Adrenal gland (tissue), 19 donors: ENCODE measurements at regions of chr1 and their contacts with region 1.

Region 1: DNA sequence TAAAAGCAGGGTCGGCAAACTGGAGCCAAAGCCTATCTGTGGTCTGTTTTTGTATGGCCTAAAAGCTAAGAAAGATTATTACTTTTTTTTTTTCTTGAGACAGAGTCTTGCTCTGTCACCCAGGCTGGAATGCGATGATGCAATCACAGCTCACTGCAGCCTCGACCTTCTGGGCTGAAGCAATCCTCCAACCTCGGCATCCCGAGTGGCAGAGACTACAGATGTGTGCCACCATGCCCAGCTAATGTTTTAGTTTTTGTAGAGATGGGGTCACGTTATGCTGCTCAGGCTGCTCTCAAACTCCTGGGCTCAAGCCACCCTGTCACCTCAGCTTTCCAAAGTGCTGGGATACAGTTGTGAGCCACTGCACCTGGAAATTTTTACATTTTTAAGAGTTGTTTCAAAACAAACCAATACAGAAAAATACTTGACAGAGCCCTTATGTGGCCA is 6.5 kb upstream of the GLRX2 start:
- DNase-seq: peak; percentile 76 to 94 (median 92)
- H3K4me3 ChIP-seq: no peak overlapping the region
- H3K27ac ChIP-seq: peak overlapping the region; percentile 28 to 88 (median 69)
- H3K4me1 ChIP-seq: peaks cover 12 to 27% of the 10 kb centered on the region in 2 donors
- H3K27me3 ChIP-seq: no peaks in the 10 kb centered on the region
- CTCF ChIP-seq: no peak
- POLR2A ChIP-seq: peak in 1 of 2 donors; percentile 69

Region 2: DNA sequence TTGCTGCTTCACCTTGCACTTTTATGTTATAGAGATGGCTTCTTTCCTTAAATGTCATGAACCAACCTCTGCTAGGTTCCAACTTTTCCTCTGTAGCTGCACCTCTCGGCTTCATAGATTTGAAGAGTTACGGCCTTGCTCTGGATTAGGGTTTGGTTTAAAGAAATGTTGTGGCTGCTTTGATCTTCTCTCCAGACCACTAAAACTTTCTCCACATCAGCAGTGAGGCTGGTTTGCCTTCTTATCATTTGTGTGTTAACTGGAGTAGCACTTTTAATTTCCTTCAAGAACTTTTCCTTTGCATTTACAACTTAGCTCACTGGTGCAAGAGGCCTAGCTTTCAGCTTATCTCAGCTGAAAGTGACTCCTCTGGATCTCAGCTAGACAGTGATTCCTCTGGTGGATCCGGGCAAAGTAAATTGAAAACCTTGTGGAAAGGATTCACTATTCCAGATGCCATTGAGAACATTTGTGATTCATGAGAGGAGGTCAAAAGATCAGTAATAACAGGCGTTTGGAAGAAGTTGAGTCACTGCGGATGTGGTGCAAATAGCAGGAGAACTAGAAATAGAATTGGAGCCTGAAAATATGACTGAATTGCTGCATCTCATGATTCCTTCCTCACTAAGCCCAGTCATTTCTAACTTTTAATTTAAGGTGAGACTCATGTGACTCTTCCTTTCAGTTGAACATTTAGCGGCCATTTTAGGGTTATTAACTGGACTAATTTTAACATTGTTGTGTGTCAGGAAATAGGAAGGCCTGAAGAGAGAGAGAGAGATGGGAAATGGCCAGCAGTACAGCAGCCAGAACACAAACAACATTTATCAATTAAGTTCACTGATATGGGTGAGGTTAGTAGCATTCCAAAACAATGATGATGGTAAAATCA is 552.3 kb before region 1 on chr1:
- intact Hi-C with region 1: no loop called
- DNase-seq: peak in 5 of 7 donors; percentile 15 to 51 (median 26)
- H3K4me3 ChIP-seq: no peak overlapping the region
- H3K27ac ChIP-seq: peak overlapping the region in 3 of 5 donors; percentile 25 to 61 (median 39)
- H3K4me1 ChIP-seq: peaks cover 0 to 8% of the 10 kb centered on the region in 2 donors
- H3K27me3 ChIP-seq: no peaks in the 10 kb centered on the region
- CTCF ChIP-seq: no peak
- POLR2A ChIP-seq: no peak

Region 3: DNA sequence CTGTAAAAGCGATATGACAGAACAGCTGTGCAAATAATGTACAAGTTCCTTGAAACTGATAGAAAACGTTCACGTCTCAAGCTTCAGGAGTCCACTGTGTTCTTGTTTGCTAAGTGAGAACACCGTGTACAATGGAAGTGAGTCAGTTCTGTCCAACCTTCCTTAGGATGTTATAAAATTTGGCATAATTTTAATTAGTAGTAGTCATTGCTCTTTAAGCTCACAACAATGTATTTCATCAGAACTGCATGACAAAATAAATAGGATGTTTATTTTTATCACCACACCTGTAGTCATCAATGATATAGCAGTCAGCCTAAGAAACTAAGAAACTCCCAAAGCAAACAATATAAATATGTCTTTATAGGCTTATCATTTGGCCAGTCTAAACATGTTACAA is 249.8 kb before region 1 on chr1:
- intact Hi-C with region 1: no loop called
- DNase-seq: no peak
- H3K4me3 ChIP-seq: no peak overlapping the region
- H3K27ac ChIP-seq: no peak overlapping the region
- H3K4me1 ChIP-seq: peaks cover 0 to 6% of the 10 kb centered on the region in 2 donors
- H3K27me3 ChIP-seq: no peaks in the 10 kb centered on the region
- CTCF ChIP-seq: no peak
- POLR2A ChIP-seq: no peak

Region 4: GRCh38 chr1:193059268-193060225 is 52.1 kb before region 1 on chr1 and contains the starts of genes RO60 and UCHL5:
- intact Hi-C with region 1: loop called in 1 of 2 experiments (anchors 10 kb)
- DNase-seq: peak; percentile 96 to 98 (median 98)
- H3K4me3 ChIP-seq: peak within 1 kb of the TSS; percentile 66 to 78 (median 73)
- H3K27ac ChIP-seq: peak within 1 kb of the TSS; percentile 88 to 99 (median 96)
- H3K4me1 ChIP-seq: peaks cover 20 to 36% of the 10 kb centered on the region in 2 donors
- H3K27me3 ChIP-seq: no peaks in the 10 kb centered on the region
- CTCF ChIP-seq: no peak
- POLR2A ChIP-seq: peak; percentile 47 to 88
- total RNA-seq, gene RO60: 60.7 to 100 (median 76.5) TPM
- total RNA-seq, gene UCHL5: 11.4 to 43.3 (median 24.8) TPM